ENCODE measurements at regions of chr15 and their contacts with region 1.

Region 1: GRCh38 chr15:70463460-70463881 is 299.9 kb downstream of the UACA start:
- DNase-seq: peak in 3 of 4 experiments; percentile 63 to 66 (median 66)
- ATAC-seq: peak; percentile 66
- H3K4me3 ChIP-seq: no peak overlapping the region
- H3K27ac ChIP-seq: peak overlapping the region; percentile 12; the same call in 1 of the 3 replicates
- H3K4me1 ChIP-seq: peaks cover 11 to 23% of the 10 kb centered on the region in 2 experiments; a peak in 4 of 5 replicates
- H3K27me3 ChIP-seq: no peaks in the 10 kb centered on the region; a peak in 1 of 5 replicates
- CTCF ChIP-seq: no peak
- EP300 ChIP-seq: peak; percentile 25; the same call in 1 of the 2 replicates
- POLR2A ChIP-seq: no peak
- RAD21 ChIP-seq: no peak

Region 2: DNA sequence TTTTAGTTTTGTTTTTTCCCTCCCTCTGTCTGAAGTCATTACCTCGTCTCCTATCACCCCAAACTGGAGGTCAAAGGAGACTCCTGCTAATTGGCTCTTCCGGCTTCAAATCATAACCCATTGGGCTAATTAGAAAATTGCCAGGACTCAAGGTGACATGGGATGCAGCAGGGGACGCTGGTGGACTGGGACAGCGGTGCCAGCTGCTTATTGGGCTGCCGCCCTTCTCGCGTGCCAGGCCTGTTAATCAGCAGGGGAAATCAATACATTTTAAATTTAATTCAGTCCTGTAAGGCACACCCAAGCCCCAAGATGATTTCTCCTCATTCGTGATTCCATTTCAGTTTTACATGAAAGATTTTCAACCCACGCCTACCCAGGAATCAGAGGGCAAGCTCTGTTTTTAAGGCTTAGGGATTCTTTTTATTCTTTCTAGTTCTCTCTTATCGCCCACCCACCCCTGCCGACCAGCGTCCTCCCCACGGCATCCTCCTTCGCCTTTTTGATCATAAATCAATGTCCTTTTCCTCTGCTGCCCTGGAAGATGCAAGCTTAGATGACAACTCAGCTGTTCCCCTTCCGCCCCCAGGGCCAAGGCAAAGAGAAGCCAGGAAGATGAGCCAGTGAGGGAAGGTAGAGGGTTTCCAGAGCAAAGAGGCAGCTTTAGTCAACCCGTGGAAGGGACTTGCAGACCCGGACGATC is 29.7 kb before region 1 on chr15:
- CTCF ChIA-PET with region 1: no interaction called
- POLR2A ChIA-PET with region 1: no interaction called
- in situ Hi-C with region 1: no loop called
- intact Hi-C with region 1: loop called (anchors 1 kb)
- DNase-seq: no peak
- ATAC-seq: no peak
- H3K4me3 ChIP-seq: no peak overlapping the region
- H3K27ac ChIP-seq: no peak overlapping the region
- H3K4me1 ChIP-seq: peaks cover 3 to 31% of the 10 kb centered on the region in 2 experiments
- H3K27me3 ChIP-seq: no peaks in the 10 kb centered on the region
- CTCF ChIP-seq: peak in 2 of 3 experiments; percentile 19 to 46; a peak in 3 of 6 replicates
- EP300 ChIP-seq: no peak
- POLR2A ChIP-seq: no peak
- RAD21 ChIP-seq: peak in 1 of 2 experiments; percentile 42; a peak in 3 of 4 replicates